A673 (cell line): ENCODE measurements at regions of chr2 and their contacts with region 1.

Region 1: DNA sequence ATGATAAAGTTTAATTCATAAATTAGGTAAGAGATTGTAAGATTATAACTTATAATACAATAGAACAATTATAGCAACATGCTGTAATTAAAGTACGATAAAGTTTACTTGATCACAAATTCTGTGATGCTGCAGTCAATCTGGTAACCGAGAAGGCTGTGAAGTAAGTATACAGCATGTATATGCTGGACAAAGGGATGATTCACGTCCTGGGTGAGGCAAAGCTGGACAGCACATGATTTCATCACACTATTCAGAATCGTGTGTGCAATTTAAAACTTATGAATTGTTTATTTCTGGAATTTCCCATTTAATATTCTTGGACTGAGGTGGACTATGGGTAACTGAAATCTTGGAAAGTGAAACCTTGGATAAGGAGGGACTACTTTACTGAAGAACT is 522.2 kb upstream of the CNTNAP5 start:
- DNase-seq: no peak
- H3K4me3 ChIP-seq: no peak overlapping the region
- H3K27ac ChIP-seq: no peak overlapping the region
- H3K4me1 ChIP-seq: no peaks in the 10 kb centered on the region
- H3K27me3 ChIP-seq: no peaks in the 10 kb centered on the region
- CTCF ChIP-seq: no peak

Region 2: GRCh38 chr2:123485056-123485455 is 17.9 kb before region 1 on chr2:
- CTCF ChIA-PET with region 1: no interaction called
- POLR2A ChIA-PET with region 1: interaction called, 20 read pairs
- intact Hi-C with region 1: no loop called
- DNase-seq: no peak
- H3K4me3 ChIP-seq: no peak overlapping the region
- H3K27ac ChIP-seq: no peak overlapping the region
- H3K4me1 ChIP-seq: no peaks in the 10 kb centered on the region
- H3K27me3 ChIP-seq: no peaks in the 10 kb centered on the region
- CTCF ChIP-seq: no peak